Left ventricle myocardium superior (tissue), 1 donor: ENCODE measurements at regions of chr22 and their contacts with region 1.

Region 1: DNA sequence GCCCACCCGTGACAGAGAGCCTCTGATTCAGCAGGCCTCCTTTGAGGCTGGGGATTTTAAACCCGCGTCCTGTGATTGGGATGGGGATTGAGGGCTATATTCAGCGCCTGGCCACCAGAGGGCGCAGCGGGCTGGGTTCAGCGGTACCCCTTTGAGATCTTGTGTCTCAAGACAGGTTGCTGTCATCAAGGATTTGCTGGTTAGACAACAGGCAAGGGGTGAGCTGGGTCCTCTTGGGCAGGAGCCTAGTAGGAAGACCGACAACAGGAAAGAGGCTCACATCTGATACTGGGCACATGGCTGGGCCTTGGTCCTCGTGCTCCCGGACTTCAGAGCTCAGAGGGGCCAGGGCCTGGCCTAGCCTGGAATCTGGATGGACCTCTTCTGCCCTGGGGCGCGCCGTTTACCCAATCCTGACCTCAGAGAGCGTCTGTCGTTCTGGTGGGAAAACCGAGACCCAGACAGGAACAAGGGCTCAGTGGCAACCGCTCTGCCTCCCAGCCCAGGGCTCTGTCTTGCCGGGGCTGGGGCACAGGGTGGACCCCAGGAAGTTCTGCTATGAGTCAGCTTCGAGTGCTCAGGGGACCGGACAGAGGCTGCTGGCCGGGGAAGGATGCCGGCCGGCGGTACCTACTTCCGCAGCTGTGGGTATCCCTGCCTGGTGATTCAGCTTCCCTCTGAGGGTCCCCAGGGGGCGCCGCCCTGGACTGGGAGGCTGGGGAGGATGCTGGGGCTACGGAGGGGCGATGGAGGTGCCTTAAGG is 929 bp upstream of the SLC35E4 start:
- DNase-seq: peak; percentile 90
- ATAC-seq: peak; percentile 76

Region 2: DNA sequence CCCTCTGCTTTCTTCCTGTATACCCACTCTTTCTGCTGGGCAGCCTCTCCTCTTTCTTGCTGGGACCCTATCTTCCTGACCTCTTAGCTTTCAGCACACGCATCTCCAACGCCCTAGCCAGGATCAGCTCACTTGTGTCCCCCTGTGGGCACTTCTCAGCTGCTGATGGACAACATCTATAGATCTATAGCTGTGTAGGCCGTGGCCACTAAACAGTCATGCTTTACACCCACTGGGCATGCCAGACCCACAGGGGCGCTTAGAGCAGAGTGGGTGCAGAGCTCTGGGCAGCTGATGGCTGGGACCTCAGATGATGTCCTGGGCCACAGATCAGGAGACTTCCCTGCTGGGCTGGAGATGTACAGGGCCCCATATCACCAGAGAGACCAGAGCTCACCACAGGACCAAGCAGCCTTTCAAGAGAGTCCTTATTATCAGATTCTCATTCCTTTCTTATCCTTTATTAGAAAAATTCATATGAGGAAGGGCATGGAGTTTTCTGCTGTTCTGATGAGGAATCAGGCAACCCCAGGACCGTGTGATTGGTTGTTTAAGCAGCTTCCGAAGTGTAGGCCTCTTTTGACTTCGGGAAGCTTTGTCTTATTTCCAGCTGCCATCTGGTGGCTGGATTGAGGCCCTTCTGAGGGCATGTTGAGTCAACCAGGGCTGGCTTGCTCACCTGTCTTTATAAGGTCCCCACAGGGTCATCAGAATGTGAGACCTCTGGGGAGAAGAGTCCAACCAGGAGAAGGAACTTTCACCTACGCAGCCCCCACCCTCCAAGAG is 120.5 kb after region 1 on chr22:
- intact Hi-C with region 1: loop called (anchors 5 kb)
- DNase-seq: peak; percentile 48
- ATAC-seq: peak; percentile 84